PC-3 (cell line): ENCODE measurements at regions of chr9 and their contacts with region 1.

Region 1: GRCh38 chr9:84170521-84171141 is 169.9 kb downstream of the SLC28A3 start:
- DNase-seq: peak; percentile 36
- ATAC-seq: peak; percentile 33; the same call in 1 of the 2 replicates
- H3K4me3 ChIP-seq: no peak overlapping the region
- H3K27ac ChIP-seq: no peak overlapping the region
- H3K4me1 ChIP-seq: peaks cover 3% of the 10 kb centered on the region; the same call in 1 of the 2 replicates
- H3K27me3 ChIP-seq: 0 out of 2 replicates have a peak, but pooled peaks cover 4% of the 10 kb centered on the region
- CTCF ChIP-seq: no peak

Region 2: GRCh38 chr9:83992421-83992820 is 178.2 kb before region 1 on chr9:
- CTCF ChIA-PET with region 1: interaction called, 3 read pairs
- POLR2A ChIA-PET with region 1: no interaction called
- intact Hi-C with region 1: loop called (anchors 5 kb)
- DNase-seq: peak; percentile 64
- ATAC-seq: peak; percentile 78
- H3K4me3 ChIP-seq: no peak overlapping the region
- H3K27ac ChIP-seq: no peak overlapping the region
- H3K4me1 ChIP-seq: peaks cover 12% of the 10 kb centered on the region
- H3K27me3 ChIP-seq: no peaks in the 10 kb centered on the region
- CTCF ChIP-seq: peak; percentile 46; the same call in 1 of the 2 replicates